Right ventricle myocardium inferior (tissue), 1 donor: ENCODE measurements at regions of chr18 and their contacts with region 1.

Region 1: DNA sequence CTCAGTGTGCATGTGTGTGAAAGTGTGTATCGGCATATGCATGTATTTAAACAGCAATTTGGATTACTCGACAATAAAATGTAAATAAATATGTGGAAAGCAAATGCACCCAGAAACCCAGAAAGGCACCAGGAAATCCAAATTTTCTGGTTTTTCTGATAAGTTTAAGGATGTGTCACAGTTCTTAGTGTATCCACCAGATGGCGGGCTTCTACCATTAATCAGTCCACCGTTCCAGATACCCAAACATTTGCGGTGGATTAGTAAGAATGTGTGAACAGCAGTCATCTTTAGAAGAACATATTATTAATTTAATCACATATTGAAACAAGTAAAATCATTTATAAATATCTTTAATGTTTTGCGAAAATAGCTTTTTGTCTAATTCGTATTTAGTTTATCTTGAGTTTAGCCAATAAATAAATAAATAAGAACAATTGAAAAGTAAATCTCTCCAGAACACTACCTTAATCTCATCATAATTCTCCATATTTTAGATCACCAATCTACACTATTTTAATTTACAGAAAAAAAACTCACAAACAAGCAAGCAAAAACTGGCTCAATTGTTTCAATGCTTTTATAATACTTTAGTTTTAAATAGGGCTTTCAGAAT is 298.9 kb downstream of the DSEL start:
- DNase-seq: no peak
- ATAC-seq: no peak

Region 2: DNA sequence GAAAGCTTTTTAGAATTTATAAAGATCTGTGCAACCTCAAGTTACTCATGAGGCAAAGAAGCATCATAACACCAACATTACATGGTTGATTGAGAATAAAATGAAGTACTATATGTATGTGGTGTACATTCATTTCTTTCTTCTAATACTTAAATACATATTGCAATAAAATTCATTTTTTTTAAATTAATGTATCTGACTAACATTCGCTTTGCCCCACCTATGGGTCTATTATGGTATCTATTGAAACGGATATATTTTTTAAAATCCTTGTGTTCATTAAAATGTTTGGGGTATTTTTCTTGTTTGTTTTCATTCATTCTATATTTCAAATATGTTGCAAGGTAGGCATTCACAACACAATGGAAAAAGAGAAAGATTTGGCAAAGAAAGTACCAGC is 61.3 kb after region 1 on chr18:
- intact Hi-C with region 1: no loop called
- DNase-seq: no peak
- ATAC-seq: no peak

Region 3: GRCh38 chr18:68623342-68623741 is 1405.7 kb after region 1 on chr18:
- intact Hi-C with region 1: loop called (anchors 5 kb)
- DNase-seq: no peak
- ATAC-seq: no peak

Region 4: GRCh38 chr18:68660354-68661183 is 1442.9 kb after region 1 on chr18:
- intact Hi-C with region 1: loop called (anchors 2 kb)
- DNase-seq: no peak
- ATAC-seq: no peak